ENCODE measurements at regions of chr16 and their contacts with region 1.

Region 1: DNA sequence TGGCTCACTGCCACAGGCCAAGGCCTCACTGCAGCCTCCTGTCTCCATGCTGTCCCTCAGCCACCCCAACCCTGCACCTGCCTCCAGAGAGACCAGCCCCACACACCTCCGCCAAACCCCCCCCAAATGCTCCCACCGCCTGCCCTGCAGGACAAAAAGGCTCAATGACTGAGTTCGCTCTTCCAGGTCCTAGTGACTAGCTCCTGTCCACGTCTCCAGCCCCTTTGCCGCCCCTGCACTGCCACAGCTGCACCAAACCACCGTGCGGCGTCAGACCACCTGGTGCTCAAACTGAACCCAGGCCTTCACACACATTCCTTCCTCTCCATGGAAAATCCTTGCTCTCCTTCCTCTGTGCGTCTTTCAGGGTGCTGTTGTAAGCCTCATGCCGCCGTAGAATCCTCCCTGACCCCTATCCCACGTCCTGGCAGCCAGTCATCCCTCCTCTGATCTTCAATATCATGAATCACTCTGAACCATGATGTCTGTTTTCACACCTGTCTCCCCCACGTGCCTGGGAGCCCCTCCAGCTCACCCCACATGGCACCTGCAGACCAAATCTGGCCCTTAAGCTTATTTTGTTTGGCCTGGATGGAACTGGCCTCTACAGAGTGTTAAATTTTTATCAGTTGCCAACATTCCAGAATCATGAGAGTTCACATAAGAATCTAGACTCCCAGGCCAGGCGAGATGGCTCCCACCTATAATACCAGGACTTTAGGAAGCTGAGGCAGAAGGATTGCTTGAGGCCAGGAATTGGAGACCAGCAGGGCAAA is 4.3 kb upstream of the GSG1L start:
- DNase-seq: peak; percentile 19
- H3K4me3 Mint-ChIP-seq: no peak overlapping the region
- H3K27ac Mint-ChIP-seq: no peak overlapping the region
- H3K4me1 Mint-ChIP-seq: peaks cover 8% of the 10 kb centered on the region
- H3K27me3 Mint-ChIP-seq: peaks cover 44% of the 10 kb centered on the region
- CTCF ChIP-seq: no peak

Region 2: DNA sequence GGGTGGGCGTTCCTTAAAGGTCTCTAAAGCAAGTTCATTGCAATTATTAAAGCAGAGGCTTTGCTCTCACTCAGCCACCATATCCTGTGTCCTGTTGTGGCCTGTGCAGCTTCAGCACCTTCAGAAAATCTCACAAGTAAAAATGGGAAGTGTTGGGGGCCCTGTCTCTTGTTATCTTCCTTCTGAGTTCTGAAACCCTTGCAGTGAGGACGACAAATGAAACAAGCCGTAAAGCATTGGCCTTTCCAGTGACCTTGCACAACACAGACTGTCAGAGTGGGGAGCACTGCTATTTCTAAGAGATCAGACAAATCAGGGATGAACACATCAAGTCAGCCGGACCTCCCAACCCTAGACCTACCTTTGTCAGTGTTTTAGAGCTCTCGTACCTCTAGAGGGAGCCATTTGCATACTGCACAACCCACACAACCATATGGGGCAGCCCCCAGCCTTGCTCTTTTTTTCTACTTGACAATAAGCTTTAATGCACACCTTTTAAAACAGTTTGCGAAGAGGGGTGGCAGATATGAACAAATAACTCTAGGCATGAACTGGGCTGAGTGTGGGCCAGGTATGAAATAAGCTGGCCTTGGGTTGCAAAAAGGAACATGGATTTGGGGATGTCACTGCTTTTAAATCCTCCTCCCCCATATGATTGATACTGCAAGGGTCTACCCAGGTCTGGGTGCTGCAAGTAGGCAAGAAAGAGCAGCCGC is 428.1 kb before region 1 on chr16:
- CTCF ChIA-PET with region 1: interaction called, 16 read pairs
- POLR2A ChIA-PET with region 1: no interaction called
- intact Hi-C with region 1: loop called (anchors 1 kb)
- DNase-seq: peak; percentile 52
- H3K4me3 Mint-ChIP-seq: no peak overlapping the region
- H3K27ac Mint-ChIP-seq: no peak overlapping the region
- H3K4me1 Mint-ChIP-seq: no peaks in the 10 kb centered on the region
- H3K27me3 Mint-ChIP-seq: no peaks in the 10 kb centered on the region
- CTCF ChIP-seq: peak; percentile 42

Region 3: DNA sequence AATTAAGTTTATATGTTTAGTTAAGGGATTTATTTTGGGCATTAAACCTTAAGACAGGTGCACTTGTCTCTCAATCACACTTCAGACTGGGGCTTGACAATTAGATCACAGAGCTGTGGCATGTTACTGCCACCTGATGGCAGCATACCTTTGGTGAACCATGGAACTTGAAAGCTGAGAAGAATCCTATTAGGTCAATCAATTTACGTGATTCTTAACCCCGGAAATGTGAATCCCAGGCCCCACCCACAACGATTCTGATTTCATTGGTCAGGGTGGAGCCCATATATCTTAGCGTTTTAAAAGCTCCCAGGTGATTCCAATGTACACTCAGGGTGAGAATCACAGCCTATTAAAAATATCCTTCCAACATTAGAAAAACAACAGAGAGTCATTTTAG is 95.3 kb before region 1 on chr16:
- CTCF ChIA-PET with region 1: interaction called, 68 read pairs
- POLR2A ChIA-PET with region 1: interaction called, 10 read pairs
- intact Hi-C with region 1: loop called (anchors 1 kb)
- DNase-seq: peak; percentile 63
- H3K4me3 Mint-ChIP-seq: no peak overlapping the region
- H3K27ac Mint-ChIP-seq: no peak overlapping the region
- H3K4me1 Mint-ChIP-seq: no peaks in the 10 kb centered on the region
- H3K27me3 Mint-ChIP-seq: peaks cover 17% of the 10 kb centered on the region
- CTCF ChIP-seq: peak; percentile 43

Region 4: DNA sequence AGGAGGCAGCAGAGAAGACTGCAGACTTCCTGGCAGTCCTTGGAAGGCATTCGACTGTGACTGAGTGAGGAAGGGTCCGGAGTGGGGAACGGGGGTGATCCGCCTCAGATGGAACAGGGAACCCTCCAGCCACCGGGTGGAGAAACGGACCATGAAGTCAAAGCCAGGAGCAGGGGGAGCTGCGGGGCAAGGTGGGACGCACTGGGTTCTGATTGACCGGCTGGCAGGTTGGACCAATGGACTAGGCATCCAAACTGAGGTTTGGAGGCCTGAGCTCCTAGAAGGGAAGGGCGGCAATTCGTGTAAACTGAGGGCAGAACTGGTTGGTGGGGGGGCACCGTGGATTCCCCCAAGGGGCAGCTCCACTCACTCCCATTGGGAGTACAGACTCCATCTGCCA is 10.7 kb before region 1 on chr16:
- CTCF ChIA-PET with region 1: interaction called, 15 read pairs
- POLR2A ChIA-PET with region 1: no interaction called
- intact Hi-C with region 1: no loop called
- DNase-seq: no peak
- H3K4me3 Mint-ChIP-seq: no peak overlapping the region
- H3K27ac Mint-ChIP-seq: no peak overlapping the region
- H3K4me1 Mint-ChIP-seq: no peaks in the 10 kb centered on the region
- H3K27me3 Mint-ChIP-seq: peaks cover 67% of the 10 kb centered on the region
- CTCF ChIP-seq: no peak

Region 5: DNA sequence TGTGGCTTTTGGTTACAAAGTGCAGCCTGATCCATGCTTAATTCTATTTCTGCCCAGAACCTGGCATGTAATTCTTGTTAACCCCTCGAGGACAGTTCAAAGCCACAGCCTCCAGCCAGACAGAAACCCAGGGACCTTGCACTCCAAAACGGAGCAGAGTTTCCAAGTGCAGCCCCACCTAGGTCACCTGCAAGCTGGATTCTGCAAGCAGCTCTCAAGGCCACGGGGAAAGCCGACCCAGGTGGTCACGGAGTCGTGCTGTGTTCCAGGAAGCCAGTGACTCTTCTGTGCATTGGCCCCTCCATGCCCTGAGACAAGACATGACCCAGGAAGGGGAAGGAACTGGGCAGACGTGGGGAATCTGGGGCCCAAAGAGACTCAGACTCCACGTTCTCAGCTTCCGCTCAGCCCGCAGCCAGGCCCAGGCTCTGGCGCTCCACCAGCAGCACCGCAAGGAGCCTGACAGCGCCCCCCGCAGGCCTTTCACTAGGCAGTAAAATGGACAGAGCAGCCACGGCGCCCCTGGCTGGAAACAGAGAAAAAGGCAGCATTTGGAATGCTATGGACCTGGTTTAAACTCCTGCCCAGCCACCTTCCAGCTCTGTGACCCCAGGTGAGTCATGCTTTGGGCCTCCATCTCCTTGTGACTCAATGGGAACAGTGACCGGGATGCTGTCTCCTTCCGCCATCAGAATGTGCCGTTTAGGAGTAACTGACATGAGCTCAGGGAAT is 23.0 kb after region 1 on chr16:
- CTCF ChIA-PET with region 1: interaction called, 15 read pairs
- POLR2A ChIA-PET with region 1: no interaction called
- intact Hi-C with region 1: no loop called
- DNase-seq: no peak
- H3K4me3 Mint-ChIP-seq: no peak overlapping the region
- H3K27ac Mint-ChIP-seq: no peak overlapping the region
- H3K4me1 Mint-ChIP-seq: no peaks in the 10 kb centered on the region
- H3K27me3 Mint-ChIP-seq: no peaks in the 10 kb centered on the region
- CTCF ChIP-seq: peak; percentile 12